Common myeloid progenitor, CD34-positive (primary cell): ENCODE measurements at regions of chr9 and their contacts with region 1.

Region 1: DNA sequence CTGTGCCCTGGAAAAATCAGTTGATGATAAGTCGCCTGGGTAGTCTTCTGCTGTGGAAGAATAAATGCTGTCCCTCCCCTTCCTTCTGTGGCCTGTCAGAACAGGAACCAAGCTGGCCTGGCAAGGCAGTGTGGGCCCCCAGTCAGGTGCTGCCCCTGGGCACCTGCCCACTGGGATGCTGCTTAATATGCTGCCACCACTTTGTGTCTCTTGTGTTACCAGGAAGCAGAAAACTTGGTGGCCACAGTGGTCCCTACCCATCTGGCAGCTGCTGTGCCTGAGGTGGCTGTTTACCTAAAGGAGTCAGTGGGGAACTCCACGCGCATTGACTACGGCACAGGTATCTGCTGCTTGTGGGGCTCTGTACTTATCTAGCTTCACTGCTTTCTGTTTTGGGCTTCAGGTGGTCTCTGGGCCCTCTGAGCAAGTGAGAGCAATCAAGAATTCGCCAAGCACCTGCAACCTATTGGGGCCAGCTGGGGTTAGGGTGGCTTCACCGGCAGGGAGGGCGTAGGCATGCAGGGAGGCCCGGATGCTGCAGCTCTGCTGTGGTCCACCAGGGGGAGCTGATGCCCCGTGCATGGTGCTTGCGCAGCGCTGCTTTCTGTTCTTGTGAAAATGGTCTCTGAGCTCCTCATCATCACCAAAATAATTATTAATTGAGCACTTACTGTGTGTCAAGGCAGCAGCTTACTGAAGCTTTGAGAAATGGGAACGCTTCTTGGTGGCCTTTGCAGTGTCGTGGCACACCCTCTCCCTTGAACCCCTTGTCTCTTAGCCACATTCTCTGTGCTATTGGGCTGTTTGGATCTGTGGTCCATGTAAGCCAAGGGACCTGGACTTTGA is 20.3 kb downstream of the PTPA start:
- DNase-seq: peak; percentile 67 to 85 (median 83)
- H3K4me3 ChIP-seq: no peak overlapping the region
- H3K27ac ChIP-seq: no peak overlapping the region
- H3K4me1 ChIP-seq: peaks cover 0 to 18% (median 14%) of the 10 kb centered on the region in 4 experiments
- H3K27me3 ChIP-seq: no peaks in the 10 kb centered on the region

Region 2: DNA sequence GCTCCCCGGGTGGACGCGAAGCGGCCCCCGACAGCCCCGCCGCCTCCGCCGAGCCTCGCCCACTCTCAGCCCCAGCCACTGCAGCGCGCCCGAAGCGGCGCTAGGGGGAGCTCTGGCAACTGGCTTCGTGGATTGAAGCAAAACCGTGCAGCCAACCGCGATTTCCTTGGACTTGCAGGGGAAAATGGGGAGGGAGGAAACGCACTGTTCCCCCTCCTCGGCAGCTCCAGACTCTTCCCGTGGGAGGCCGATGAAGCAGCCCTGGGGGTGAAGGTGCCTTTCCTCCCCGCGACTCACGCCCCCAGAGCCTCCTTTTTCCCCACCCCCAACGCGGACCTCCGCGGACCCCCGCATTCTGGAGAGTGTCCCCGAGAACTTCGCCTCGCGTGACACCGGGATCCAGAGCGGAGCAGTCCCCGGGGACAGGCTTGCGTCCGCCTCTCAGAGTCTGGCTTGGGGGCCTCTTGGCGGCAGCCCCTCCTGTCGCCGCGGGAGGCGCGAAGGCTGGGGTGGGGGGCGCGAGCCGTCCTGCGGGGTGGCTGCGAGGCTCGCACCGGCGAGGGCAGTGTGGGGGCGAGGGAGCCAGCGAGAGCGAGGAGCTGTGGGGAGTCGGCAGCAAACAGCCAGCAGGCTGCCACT is 42.7 kb after region 1 on chr9:
- CTCF ChIA-PET with region 1: interaction called, 42 read pairs
- POLR2A ChIA-PET with region 1: interaction called, 3 read pairs
- DNase-seq: peak; percentile 74 to 82 (median 80)
- H3K4me3 ChIP-seq: peak overlapping the region; percentile 61 to 89 (median 78)
- H3K27ac ChIP-seq: peak overlapping the region in 1 of 2 experiments; percentile 81
- H3K4me1 ChIP-seq: peaks cover 2 to 61% (median 45%) of the 10 kb centered on the region in 4 experiments
- H3K27me3 ChIP-seq: no peaks in the 10 kb centered on the region

Region 3: DNA sequence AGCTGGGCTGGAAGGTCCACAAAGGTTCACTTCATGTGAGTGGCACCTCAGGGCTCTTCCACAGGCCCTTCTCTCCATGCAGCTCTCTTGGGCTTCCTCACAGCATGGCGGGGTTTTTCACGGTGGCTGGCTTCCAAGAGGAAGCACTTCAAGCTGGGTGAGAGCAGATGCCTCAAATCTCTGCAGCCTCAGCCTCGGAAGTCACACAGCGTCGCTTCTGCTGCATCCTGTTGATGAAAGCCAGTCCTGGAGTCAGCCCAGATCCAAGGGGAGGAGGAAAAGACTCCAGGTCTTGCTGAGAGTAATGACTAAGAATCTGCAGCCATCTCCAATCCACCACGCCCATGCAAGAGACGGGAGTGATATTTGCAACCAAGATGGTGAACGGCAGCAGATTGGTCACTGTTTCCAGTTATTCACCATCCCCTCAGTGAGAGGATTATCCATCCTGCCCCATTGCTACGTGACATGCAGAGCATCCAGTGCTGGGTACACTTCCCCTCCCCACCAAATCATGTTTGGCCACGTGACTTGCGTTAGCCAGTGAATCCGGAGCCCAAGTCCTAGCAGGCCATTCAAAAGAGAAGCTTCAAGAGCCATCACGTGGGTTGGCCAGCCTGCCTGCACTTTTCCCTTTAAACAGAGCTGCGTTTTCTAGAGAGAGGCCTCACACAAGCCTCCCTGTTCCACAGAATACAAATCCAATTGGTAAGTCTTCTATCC is 315.5 kb after region 1 on chr9:
- CTCF ChIA-PET with region 1: no interaction called
- POLR2A ChIA-PET with region 1: no interaction called
- DNase-seq: peak in 2 of 3 donors; percentile 49 to 59
- H3K4me3 ChIP-seq: no peak overlapping the region
- H3K27ac ChIP-seq: no peak overlapping the region
- H3K4me1 ChIP-seq: peaks cover 0 to 9% (median 5%) of the 10 kb centered on the region in 4 experiments
- H3K27me3 ChIP-seq: no peaks in the 10 kb centered on the region

Region 4: DNA sequence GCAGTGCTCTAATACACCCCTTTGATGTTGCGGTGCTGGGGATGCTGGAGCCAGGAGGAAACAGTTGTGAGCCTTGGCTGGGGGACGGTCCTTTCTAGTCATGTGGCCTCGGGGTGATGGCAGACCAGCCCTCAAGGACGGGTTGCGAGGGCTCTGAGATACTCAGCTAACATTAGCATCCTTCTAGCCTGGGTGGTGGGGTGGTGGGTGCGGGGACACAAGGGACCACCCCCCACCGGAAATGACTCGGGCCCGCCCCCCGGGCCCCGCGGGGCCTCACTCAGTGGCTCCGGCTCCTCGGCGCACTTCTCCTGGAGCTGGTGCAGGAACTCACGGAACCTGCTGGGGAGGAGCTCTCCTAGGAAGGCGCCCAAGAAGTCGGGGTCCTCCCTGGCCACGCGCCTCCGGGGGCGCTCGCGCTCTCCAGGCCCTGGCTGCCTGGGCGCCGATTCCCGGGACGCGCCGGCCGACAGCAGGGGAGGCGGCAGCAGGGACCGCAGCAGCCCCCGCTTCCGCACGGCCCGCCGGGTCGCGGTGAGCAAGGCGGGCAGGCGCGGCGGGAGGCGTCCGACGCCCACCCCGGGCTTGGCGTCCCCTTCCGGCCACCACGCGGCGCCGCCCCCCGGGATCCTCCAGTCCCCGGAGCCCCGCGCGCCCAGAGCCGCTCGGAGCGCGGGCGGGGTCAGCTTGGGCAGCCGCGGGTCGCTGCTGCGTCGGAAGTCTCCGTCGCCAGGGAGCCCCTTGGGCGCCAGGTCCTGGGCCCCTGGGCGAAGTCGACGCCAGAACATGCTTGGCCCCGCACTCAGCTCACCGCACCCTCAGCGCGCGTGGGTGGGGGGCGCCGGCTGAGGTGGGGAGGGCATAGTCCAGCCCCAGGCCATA is 488.5 kb after region 1 on chr9:
- CTCF ChIA-PET with region 1: interaction called, 57 read pairs
- POLR2A ChIA-PET with region 1: interaction called, 3 read pairs
- DNase-seq: peak in 2 of 3 donors; percentile 52 to 62
- H3K4me3 ChIP-seq: peak overlapping the region; percentile 34 to 75 (median 63)
- H3K27ac ChIP-seq: no peak overlapping the region
- H3K4me1 ChIP-seq: peaks cover 8 to 28% (median 25%) of the 10 kb centered on the region in 4 experiments
- H3K27me3 ChIP-seq: peaks cover 0 to 4% (median 3%) of the 10 kb centered on the region in 5 experiments